Right ventricle myocardium superior (tissue), 1 donor: ENCODE measurements at regions of chr4 and their contacts with region 1.

Region 1: DNA sequence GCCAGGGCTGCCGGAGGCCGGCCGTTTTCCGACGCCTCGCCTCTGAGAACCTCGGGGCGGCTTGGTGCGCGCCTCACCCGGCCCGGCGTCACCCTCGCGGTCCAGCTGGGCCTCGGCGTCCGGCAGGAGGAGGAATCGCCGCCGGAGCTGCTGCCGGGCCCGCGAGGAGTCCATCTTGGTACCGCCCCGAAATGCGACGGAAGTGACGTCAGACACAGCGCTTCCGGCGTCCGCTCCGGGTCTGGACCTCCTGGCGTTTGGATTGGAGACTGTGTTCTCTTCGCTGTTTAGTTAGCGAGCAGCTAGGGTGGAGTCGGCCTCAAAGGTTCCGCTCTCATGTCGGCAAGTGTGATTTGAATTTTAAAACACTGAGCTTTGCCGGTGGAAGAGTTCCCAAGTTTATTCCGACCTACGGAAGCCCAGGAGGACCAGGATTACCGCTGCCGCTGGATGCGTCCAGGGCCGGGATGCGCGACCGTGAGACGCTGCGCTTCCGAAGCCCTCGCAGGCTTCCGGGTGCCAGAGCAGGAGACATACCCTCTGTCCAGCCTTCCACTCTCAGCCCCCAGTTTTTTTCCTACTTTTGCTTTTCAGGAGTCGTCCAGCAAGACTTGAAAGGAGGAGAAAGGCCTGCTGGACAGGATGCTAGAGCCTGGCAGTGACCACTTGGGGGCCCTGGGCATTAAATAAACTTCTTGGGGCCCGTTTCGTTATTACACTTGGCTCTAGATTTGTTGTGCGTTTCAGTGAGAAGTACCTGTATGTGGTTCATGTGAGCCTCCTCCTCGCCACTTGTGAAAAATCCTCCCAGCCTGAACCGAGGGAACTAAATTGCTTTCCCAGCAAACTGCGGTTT is at the start of gene TMEM128:
- DNase-seq: peak; percentile 96
- ATAC-seq: peak; percentile 99
- total RNA-seq, gene TMEM128: 7.7 TPM

Region 2: DNA sequence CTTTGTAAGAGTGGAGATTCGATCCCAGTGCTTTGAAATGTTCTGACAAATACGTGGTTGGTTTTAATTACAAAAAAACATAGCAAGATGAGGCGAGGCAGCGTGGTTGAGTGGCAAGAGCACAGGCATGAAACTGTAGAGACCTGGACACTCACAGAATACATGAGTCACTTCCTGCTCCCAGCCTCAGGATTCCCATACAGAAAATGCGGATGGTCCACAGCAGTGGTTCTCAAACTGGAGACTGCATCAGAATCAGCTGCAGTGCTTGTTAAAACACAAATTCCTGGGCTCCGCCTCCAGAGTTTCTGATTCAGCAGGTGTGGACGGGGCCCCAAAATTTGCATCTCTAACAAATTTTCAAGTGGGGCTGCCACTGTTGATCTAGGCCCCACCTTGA is 31.6 kb before region 1 on chr4:
- intact Hi-C with region 1: no loop called
- DNase-seq: no peak
- ATAC-seq: no peak

Region 3: GRCh38 chr4:4308800-4309441 is 60.7 kb after region 1 on chr4:
- intact Hi-C with region 1: no loop called
- DNase-seq: no peak
- ATAC-seq: no peak

Region 4: GRCh38 chr4:4334798-4335520 is 86.7 kb after region 1 on chr4:
- intact Hi-C with region 1: loop called (anchors 2 kb)
- DNase-seq: peak; percentile 72
- ATAC-seq: peak; percentile 69